ENCODE measurements at regions of chr7 and their contacts with region 1.

Region 1: GRCh38 chr7:18978108-18978495 is 139.3 kb downstream of the TWIST1 start:
- DNase-seq: peak; percentile 94
- ATAC-seq: peak; percentile 61
- H3K4me3 ChIP-seq: peak overlapping the region; percentile 54
- H3K27ac ChIP-seq: peak overlapping the region; percentile 97
- H3K4me1 ChIP-seq: peaks cover 50% of the 10 kb centered on the region
- H3K27me3 ChIP-seq: no peaks in the 10 kb centered on the region
- CTCF ChIP-seq: no peak

Region 2: DNA sequence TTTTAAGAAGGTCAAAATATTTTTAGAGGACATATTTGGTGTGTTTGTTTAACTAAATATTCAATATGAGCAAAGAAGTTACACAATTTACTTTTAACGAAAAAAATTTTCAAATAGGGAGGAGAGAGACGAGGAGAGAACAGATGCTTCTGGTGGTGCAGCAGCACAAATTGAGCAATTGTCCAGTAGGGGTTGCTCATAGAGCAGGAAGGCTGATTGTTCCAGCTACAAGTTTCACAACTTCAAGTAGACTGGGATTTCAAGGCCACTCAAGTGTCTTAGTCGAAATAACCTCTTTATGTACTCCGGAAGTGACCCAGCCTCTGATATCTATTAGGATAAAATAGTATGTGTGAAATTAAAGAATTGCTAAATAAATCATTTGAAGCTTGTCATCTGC is 284.7 kb before region 1 on chr7:
- CTCF ChIA-PET with region 1: no interaction called
- POLR2A ChIA-PET with region 1: no interaction called
- intact Hi-C with region 1: loop called (anchors 10 kb)
- DNase-seq: peak; percentile 71
- ATAC-seq: peak; percentile 87
- H3K4me3 ChIP-seq: no peak overlapping the region
- H3K27ac ChIP-seq: no peak overlapping the region
- H3K4me1 ChIP-seq: no peaks in the 10 kb centered on the region
- H3K27me3 ChIP-seq: no peaks in the 10 kb centered on the region
- CTCF ChIP-seq: peak; percentile 88

Region 3: GRCh38 chr7:18873734-18874336 is 104.3 kb before region 1 on chr7:
- CTCF ChIA-PET with region 1: interaction called, 3 read pairs
- POLR2A ChIA-PET with region 1: no interaction called
- intact Hi-C with region 1: loop called (anchors 5 kb)
- DNase-seq: peak; percentile 39
- ATAC-seq: peak; percentile 74
- H3K4me3 ChIP-seq: no peak overlapping the region
- H3K27ac ChIP-seq: no peak overlapping the region
- H3K4me1 ChIP-seq: peaks cover 5% of the 10 kb centered on the region; the same call in 1 of the 2 replicates
- H3K27me3 ChIP-seq: no peaks in the 10 kb centered on the region
- CTCF ChIP-seq: peak; percentile 64

Region 4: DNA sequence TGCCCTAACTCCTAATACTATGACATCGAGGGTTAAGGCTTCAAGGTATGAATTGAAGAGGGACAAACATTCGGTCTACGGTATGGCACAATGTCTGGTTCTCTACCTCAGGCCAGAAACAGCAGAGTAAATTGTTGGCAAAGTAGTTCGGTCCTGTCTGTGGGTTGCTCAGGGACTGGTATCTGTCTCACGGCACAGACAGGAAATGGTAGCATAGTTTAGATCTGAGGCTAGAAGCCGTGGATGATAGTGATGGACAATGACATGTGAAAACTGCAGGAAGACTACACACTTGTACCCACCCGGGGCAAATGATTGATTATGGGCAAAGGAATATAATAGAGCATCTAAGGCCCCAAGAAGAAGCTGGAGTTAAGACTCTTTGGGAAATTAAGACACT is 33.1 kb after region 1 on chr7:
- CTCF ChIA-PET with region 1: no interaction called
- POLR2A ChIA-PET with region 1: no interaction called
- intact Hi-C with region 1: loop called (anchors 2 kb)
- DNase-seq: no peak
- ATAC-seq: no peak
- H3K4me3 ChIP-seq: no peak overlapping the region
- H3K27ac ChIP-seq: no peak overlapping the region
- H3K4me1 ChIP-seq: peaks cover 21% of the 10 kb centered on the region
- H3K27me3 ChIP-seq: no peaks in the 10 kb centered on the region
- CTCF ChIP-seq: no peak

Region 5: DNA sequence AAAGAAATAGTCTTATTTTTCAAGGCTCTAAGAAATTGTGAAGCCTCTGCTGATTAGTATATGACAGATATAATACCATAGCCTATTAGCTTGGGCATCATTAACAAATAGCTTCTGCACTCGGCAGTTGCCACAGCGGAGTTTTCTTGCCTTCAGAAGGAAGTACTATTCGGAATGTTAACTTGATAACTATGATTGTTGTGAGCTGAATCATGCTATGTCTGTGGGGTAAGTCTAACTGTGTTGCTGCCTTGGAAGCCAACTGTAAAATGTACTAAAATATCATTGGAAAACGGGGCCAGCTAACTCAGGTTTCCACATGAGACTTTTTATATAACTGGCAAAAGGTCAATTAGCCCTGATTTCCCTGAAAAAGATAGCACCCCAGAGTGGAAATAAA is 46.2 kb after region 1 on chr7:
- CTCF ChIA-PET with region 1: no interaction called
- POLR2A ChIA-PET with region 1: no interaction called
- intact Hi-C with region 1: no loop called
- DNase-seq: peak; percentile 25
- ATAC-seq: 0 out of 2 replicates have a peak, but pooled peaks have one; percentile 12
- H3K4me3 ChIP-seq: no peak overlapping the region
- H3K27ac ChIP-seq: no peak overlapping the region
- H3K4me1 ChIP-seq: peaks cover 35% of the 10 kb centered on the region
- H3K27me3 ChIP-seq: no peaks in the 10 kb centered on the region
- CTCF ChIP-seq: no peak

Region 6: DNA sequence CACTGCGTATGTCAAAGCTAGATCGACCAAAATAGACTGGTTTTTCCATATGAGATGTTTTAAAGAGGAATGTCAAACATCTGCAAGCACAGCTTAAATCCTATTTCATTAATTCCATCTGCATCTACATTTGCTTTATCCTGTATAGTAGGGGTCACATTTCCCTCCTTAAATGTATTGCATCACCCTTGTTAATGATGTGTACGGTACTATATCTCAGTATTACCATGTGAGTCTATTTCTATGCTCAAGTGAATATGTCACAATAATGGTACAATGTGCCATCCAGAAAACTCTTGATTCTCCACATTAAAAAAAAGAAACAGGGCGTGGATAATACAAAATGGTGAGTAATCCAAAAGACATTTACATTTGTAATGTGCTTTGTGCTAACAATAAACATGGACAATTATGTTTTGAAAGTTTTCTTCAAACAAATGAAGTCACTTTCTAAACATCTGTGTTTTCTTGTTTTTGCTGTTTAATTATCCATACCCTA is 82.7 kb after region 1 on chr7:
- CTCF ChIA-PET with region 1: no interaction called
- POLR2A ChIA-PET with region 1: no interaction called
- intact Hi-C with region 1: loop called (anchors 5 kb)
- DNase-seq: peak; percentile 68
- ATAC-seq: peak; percentile 87
- H3K4me3 ChIP-seq: no peak overlapping the region
- H3K27ac ChIP-seq: no peak overlapping the region
- H3K4me1 ChIP-seq: peaks cover 14% of the 10 kb centered on the region
- H3K27me3 ChIP-seq: no peaks in the 10 kb centered on the region
- CTCF ChIP-seq: no peak

Measured in PC-3 (cell line).